A673 (cell line): ENCODE measurements at regions of chr22 and their contacts with region 1.

Region 1: GRCh38 chr22:42070517-42071422 is at the start of gene NAGA:
- DNase-seq: peak; percentile 99
- H3K4me3 ChIP-seq: peak within 1 kb of the TSS; percentile 67
- H3K27ac ChIP-seq: peak within 1 kb of the TSS; percentile 86
- H3K4me1 ChIP-seq: peaks cover 7% of the 10 kb centered on the region
- H3K27me3 ChIP-seq: no peaks in the 10 kb centered on the region
- CTCF ChIP-seq: no peak
- total RNA-seq, gene NAGA: 17.7 and 18.4 TPM in 2 replicates

Region 2: GRCh38 chr22:41873391-41873790 is 197.4 kb before region 1 on chr22:
- CTCF ChIA-PET with region 1: no interaction called
- POLR2A ChIA-PET with region 1: interaction called, 11 read pairs
- intact Hi-C with region 1: no loop called
- DNase-seq: no peak
- H3K4me3 ChIP-seq: no peak overlapping the region
- H3K27ac ChIP-seq: no peak overlapping the region
- H3K4me1 ChIP-seq: no peaks in the 10 kb centered on the region
- H3K27me3 ChIP-seq: no peaks in the 10 kb centered on the region
- CTCF ChIP-seq: no peak

Region 3: GRCh38 chr22:42090596-42091454 is 20.1 kb after region 1 on chr22 and contains the start of gene NDUFA6:
- CTCF ChIA-PET with region 1: interaction called, 3 read pairs
- POLR2A ChIA-PET with region 1: no interaction called
- intact Hi-C with region 1: loop called (anchors 1 kb)
- DNase-seq: peak; percentile 100
- H3K4me3 ChIP-seq: peak within 1 kb of the TSS; percentile 74
- H3K27ac ChIP-seq: peak within 1 kb of the TSS; percentile 97
- H3K4me1 ChIP-seq: peaks cover 15% of the 10 kb centered on the region
- H3K27me3 ChIP-seq: no peaks in the 10 kb centered on the region
- CTCF ChIP-seq: peak; percentile 92
- total RNA-seq, gene NDUFA6: 138 and 166 TPM in 2 replicates